ENCODE measurements at regions of chr19 and their contacts with region 1.

Region 1: DNA sequence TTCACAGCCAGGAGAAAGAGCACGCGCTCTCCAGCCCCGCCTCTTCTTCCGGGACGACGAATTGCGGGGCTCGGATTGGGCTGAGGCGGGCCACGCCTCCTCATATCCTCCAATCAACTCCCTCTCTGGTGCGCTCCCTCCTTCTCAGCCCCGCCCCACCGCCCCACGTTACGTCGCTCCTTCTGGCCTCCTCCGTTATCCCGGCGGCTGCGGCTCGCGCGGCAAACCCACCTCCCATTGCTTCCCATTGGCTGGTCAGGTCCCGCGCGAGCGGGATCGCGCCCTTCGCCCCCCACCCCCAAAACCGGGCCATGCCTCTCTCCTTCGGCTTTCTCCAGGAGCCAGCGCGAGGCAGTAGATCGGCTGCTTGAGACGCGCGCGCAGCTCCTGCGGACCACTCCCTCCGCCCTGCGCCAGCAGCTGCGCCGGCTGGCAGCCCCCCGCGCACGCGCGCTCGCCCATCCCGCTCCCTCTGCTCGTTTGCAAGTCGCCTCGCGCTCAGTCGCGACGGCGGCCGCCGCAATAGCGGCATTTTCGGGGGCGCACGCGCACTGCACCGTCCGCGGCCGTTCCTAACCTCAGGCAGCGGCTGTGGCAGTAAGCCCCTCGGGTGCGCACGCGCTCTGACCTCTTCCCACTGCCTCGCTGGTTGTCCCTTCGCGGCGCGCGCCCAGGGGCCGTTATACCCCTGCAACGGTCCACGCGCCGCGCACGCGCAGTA is 512 bp upstream of the ARHGAP35 start:
- DNase-seq: peak; percentile 82 to 98 (median 93)
- ATAC-seq: peak; percentile 80
- H3K4me3 ChIP-seq: peak overlapping the region; percentile 84 to 91
- H3K4me3 Mint-ChIP-seq: peak overlapping the region; percentile 92
- H3K27ac ChIP-seq: peak overlapping the region; percentile 77 to 87
- H3K27ac Mint-ChIP-seq: peak overlapping the region; percentile 94
- H3K4me1 ChIP-seq: peaks cover 44% of the 10 kb centered on the region
- H3K4me1 Mint-ChIP-seq: peaks cover 17% of the 10 kb centered on the region
- H3K27me3 ChIP-seq: no peaks in the 10 kb centered on the region
- H3K27me3 Mint-ChIP-seq: no peaks in the 10 kb centered on the region
- CTCF ChIP-seq: no peak

Region 2: GRCh38 chr19:46932346-46932745 is 72.1 kb after region 1 on chr19:
- CTCF ChIA-PET with region 1: no interaction called
- POLR2A ChIA-PET with region 1: no interaction called
- intact Hi-C with region 1: loop called in 1 of 2 experiments (anchors 5 kb)
- DNase-seq: no peak
- ATAC-seq: no peak
- H3K4me3 ChIP-seq: no peak overlapping the region
- H3K4me3 Mint-ChIP-seq: no peak overlapping the region
- H3K27ac ChIP-seq: no peak overlapping the region
- H3K27ac Mint-ChIP-seq: peak overlapping the region; percentile 80
- H3K4me1 ChIP-seq: peaks cover 34% of the 10 kb centered on the region
- H3K4me1 Mint-ChIP-seq: peaks cover 68% of the 10 kb centered on the region
- H3K27me3 ChIP-seq: no peaks in the 10 kb centered on the region
- H3K27me3 Mint-ChIP-seq: no peaks in the 10 kb centered on the region
- CTCF ChIP-seq: no peak

Region 3: GRCh38 chr19:46990991-46991676 is 130.8 kb after region 1 on chr19:
- CTCF ChIA-PET with region 1: interaction called, 43 read pairs
- POLR2A ChIA-PET with region 1: no interaction called
- intact Hi-C with region 1: loop called (anchors 1 kb)
- DNase-seq: peak in 8 of 9 experiments; percentile 37 to 80 (median 65)
- ATAC-seq: peak; percentile 73
- H3K4me3 ChIP-seq: no peak overlapping the region
- H3K4me3 Mint-ChIP-seq: no peak overlapping the region
- H3K27ac ChIP-seq: no peak overlapping the region
- H3K27ac Mint-ChIP-seq: no peak overlapping the region
- H3K4me1 ChIP-seq: peaks cover 10% of the 10 kb centered on the region
- H3K4me1 Mint-ChIP-seq: peaks cover 17% of the 10 kb centered on the region
- H3K27me3 ChIP-seq: no peaks in the 10 kb centered on the region
- H3K27me3 Mint-ChIP-seq: no peaks in the 10 kb centered on the region
- CTCF ChIP-seq: peak; percentile 63

Region 4: DNA sequence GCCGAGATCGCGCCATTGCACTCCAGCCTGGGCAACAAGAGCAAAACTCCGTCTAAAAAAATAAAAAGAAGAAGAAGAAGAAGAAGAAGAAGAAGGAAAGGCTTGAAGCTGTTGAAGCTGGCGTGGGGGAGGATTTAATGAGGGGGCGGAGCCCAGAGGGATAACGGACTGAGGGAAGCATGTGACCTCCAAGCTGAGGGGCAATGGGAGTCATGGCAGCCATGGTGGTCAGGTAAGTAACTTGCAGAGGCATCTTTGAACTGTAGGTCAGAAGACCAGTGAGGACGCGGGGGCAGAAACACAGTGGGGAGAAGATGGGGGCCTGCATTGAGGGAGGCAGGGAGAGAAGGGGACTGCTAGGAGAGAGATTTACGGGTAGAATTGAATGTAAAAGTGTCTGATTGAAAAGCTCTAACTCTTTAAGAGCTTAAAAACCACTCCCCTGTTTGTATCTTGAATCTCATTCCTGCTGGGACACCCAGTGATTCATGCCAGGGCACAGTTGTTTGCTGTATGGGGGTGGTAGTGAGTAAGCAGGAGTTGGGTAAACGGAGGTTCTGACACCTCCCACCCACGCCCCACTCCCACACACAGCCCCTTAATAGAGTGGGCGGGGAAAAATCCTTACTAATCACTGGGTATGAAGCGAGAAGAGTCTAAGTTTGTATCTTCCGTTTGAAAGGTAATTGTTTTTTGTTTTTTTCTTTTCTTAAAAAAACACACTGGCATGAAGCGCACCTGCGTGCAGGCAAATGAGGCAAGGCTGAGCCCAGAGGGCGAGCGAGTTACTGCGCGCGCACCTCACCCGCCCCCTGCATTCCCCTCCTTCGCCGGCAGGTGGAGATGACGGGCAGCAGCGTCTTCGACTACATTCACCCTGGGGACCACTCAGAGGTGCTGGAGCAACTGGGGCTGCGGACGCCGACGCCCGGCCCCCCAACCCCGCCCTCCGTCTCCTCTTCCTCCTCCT is 175.1 kb after region 1 on chr19:
- CTCF ChIA-PET with region 1: interaction called, 8 read pairs
- POLR2A ChIA-PET with region 1: interaction called, 9 read pairs
- intact Hi-C with region 1: loop called (anchors 1 kb)
- DNase-seq: peak; percentile 90 to 99 (median 96)
- ATAC-seq: peak; percentile 98
- H3K4me3 ChIP-seq: peak overlapping the region; percentile 52 to 58
- H3K4me3 Mint-ChIP-seq: peak overlapping the region; percentile 88
- H3K27ac ChIP-seq: peak overlapping the region in 1 of 2 experiments; percentile 30
- H3K27ac Mint-ChIP-seq: peak overlapping the region; percentile 85
- H3K4me1 ChIP-seq: peaks cover 16% of the 10 kb centered on the region
- H3K4me1 Mint-ChIP-seq: peaks cover 17% of the 10 kb centered on the region
- H3K27me3 ChIP-seq: peaks cover 4 to 6% of the 10 kb centered on the region in 2 experiments
- H3K27me3 Mint-ChIP-seq: peaks cover 8% of the 10 kb centered on the region
- CTCF ChIP-seq: peak; percentile 99